Dendritic cell treated with granulocyte-macrophage colony-stimulating factor and Interleukin-4, amounts not matched to agents 40 ng/mL and 50 ng/mL, for 4 days (primary cell): ENCODE measurements at regions of chr1 and their contacts with region 1.

Region 1: DNA sequence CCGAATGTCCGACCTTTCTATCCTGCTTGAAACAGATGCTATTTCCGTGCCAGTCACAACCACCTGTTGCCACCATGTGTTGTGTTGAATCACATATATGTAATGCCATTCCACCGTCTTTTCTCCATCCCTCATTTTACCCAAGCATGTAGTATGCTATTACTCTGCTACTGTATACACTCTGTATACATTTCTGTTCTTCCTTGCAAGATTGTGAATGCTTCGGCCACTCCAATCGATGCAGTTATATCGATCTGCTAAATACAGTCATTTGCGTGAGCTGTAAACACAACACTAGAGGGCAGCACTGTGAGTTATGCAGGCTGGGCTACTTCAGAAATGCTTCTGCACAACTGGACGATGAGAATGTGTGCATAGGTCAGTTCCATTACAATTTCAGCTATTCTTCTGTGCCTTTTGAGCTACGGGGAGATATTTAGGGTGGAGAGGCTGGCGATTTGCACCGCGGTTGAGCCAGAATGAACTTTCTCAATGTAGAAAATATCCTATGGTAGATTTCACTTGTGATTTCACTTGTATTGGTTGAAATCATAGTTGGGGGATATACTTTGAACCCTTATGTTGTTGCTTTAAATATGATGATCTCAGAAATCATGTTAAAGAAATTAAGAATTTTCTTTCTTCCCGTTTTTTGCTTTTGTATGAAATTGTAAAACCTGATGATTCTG is 289.8 kb downstream of the NTNG1 start:
- H3K4me3 Mint-ChIP-seq: no peak overlapping the region
- H3K27ac Mint-ChIP-seq: no peak overlapping the region
- H3K4me1 Mint-ChIP-seq: no peaks in the 10 kb centered on the region
- H3K27me3 Mint-ChIP-seq: no peaks in the 10 kb centered on the region

Region 2: DNA sequence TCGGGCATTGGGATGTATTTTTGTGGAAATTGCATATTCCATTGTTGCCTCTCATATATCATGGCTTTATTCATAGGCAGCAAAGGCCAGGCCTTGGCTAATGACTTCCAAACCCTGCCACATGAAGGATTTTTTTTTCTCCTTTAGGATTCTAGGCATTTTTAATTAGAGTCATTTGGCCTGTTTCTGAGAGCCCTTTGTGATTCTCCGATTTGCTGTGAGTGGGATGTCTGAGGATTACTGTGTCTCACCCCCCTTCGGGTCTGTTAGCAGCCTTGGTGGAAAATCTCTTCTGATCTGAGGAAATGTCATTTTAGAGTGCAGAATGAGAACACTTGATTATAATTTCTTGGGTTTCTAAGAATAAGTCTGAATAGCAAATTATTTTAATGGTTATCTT is 36.4 kb before region 1 on chr1:
- intact Hi-C with region 1: no loop called
- H3K4me3 Mint-ChIP-seq: no peak overlapping the region
- H3K27ac Mint-ChIP-seq: no peak overlapping the region
- H3K4me1 Mint-ChIP-seq: no peaks in the 10 kb centered on the region
- H3K27me3 Mint-ChIP-seq: peaks cover 1% of the 10 kb centered on the region

Region 3: DNA sequence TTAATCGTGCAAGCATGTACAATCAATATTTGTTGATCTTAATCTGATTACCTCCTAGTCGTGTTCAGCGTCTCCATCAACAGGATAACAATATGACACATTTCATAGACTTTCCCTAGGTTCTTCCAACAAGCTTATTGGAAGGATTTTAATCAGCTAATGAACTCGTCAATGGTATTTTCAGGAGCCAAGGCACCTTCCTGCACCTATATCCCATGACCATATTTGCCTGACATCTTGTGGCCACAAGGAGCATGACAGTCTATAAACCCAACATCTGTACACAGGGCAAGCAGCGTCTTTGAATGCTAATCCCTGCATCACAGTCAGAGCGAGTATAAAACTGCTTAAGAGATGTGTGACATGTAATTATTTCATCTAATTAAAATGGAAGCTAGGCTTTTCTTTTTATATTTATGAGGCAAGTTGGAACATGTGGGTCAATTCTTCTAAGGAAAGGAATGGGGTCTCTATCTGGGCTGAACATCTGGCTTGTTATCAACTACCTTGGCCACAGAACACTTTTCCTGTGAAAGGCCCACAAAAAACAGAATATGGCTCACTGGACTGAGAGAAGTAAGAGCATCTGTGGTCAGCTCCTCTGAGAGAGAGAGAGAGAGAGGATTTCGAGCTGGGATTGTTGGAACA is 98.9 kb after region 1 on chr1:
- intact Hi-C with region 1: loop called (anchors 2 kb)
- H3K4me3 Mint-ChIP-seq: no peak overlapping the region
- H3K27ac Mint-ChIP-seq: no peak overlapping the region
- H3K4me1 Mint-ChIP-seq: peaks cover 29% of the 10 kb centered on the region
- H3K27me3 Mint-ChIP-seq: no peaks in the 10 kb centered on the region